ENCODE measurements at regions of chr22 and their contacts with region 1.

Region 1: GRCh38 chr22:46296257-46297150 is at the start of gene GTSE1:
- DNase-seq: peak; percentile 97 to 98 (median 97)
- H3K4me3 ChIP-seq: peak within 1 kb of the TSS; percentile 54 to 100 (median 78)
- H3K27ac ChIP-seq: peak within 1 kb of the TSS in 58 of 59 donors; percentile 4 to 97 (median 90)
- H3K27me3 ChIP-seq: no peaks in the 10 kb centered on the region
- CTCF ChIP-seq: peak in 54 of 56 donors; percentile 40 to 80 (median 60)
- total RNA-seq, gene GTSE1: 0.11 to 1.3 (median 0.53) TPM in 113 of 120 experiments, not detected in the others

Region 2: DNA sequence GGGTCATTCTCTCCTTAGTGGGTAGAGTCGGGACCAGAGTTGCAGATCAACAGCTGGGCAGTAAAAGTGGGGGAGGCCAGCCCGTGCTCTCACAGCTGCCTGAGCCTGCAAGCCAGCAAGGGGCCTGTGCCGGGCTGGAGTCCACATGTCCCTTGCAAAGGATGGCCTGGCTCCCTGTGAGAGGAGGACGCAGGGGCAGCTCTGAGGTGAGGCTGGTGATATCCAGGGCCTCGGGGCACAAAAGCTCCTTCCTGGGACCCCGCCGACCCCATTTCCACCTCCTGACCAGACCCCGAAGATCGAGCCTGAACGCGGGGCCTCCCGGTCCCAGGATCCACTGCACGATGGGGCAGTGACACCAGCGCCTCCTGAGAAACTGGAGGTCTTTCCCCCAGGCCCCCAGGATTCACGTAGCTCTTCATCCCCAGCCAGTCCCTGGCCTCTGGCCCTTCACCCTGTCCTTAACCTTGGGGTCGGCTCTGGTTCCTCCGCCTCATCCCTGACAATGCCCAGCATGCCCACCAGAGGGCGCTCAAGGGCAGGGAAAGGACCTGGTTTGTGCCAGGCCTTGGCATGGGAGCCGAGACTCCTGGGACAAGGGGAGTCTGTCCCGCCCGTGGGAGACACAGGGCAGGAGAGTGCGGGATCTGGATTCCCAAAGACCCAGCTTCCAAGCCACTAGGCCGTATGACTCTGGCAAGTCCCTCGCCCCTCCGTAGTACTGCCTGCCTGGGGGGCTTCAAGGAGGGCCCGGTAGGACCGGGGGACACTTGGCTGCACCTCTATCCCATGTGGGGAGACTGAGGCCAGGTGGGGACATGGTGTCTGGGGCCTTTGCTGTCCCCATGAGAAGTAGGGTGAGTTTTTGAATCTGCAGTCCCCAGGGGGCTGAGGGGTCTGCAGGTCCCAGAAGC is 301.8 kb before region 1 on chr22:
- intact Hi-C with region 1: loop called (anchors 5 kb)
- DNase-seq: peak in 9 of 10 donors; percentile 79 to 90 (median 86)
- H3K4me3 ChIP-seq: no peak overlapping the region
- H3K27ac ChIP-seq: peak overlapping the region in 3 of 59 donors; percentile 12 to 39 (median 36)
- H3K27me3 ChIP-seq: no peaks in the 10 kb centered on the region
- CTCF ChIP-seq: peak; percentile 86 to 99 (median 98)

Region 3: GRCh38 chr22:46122511-46122971 is 174.0 kb before region 1 on chr22:
- intact Hi-C with region 1: loop called (anchors 1 to 5 kb)
- DNase-seq: peak; percentile 61 to 80 (median 70)
- H3K4me3 ChIP-seq: peak overlapping the region in 23 of 59 donors; percentile 6 to 53 (median 28)
- H3K27ac ChIP-seq: no peak overlapping the region
- H3K27me3 ChIP-seq: no peaks in the 10 kb centered on the region
- CTCF ChIP-seq: peak; percentile 87 to 99 (median 97)

Region 4: DNA sequence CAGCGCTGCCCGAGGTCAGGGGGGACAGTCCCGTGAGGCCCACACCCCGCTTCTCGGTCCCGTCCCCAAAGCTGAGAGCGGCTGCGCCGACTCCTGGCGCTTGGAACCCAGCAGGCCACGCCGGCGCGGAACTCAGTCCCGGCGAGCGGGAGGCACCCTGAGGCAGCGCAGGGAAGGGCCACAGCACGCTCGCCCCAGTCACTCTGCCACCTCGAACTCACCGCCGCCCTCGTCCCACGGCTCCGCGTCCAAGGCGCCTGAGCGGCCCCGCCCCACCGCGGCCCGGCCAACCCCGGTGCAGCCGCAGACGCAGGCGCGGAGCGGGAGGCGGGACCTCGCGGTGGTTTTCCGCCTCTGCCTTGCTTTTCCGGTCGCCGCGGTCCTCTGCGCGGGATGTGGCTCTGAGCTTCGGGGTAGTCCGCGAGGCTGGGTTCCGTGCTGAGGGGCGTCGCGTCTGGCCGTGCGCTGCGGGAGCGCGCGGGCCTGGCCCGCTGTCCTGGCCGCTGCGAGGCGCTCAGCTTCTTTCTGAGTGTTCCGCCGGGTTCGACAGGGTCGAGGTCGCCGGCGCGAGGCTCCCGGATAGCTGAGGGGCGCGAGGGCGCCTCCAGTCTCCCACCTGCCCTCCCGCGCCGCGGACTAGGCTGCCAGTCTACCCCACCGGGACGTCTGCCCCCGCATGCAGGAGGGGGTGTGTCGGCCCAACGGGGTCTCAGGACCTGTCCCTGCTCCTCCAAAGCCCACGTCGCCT is 46.3 kb before region 1 on chr22 and contains the start of gene CDPF1:
- intact Hi-C with region 1: loop called (anchors 1 to 5 kb)
- DNase-seq: peak; percentile 81 to 96 (median 90)
- H3K4me3 ChIP-seq: peak within 1 kb of the TSS; percentile 63 to 99 (median 86)
- H3K27ac ChIP-seq: peak within 1 kb of the TSS; percentile 5 to 94 (median 85)
- H3K27me3 ChIP-seq: no peaks in the 10 kb centered on the region
- CTCF ChIP-seq: peak in 33 of 56 donors; percentile 11 to 51 (median 27)
- total RNA-seq, gene CDPF1: 3.3 to 15.3 (median 7.3) TPM

Region 5: GRCh38 chr22:46267431-46268279 is 28.8 kb before region 1 on chr22 and contains the start of gene TTC38:
- intact Hi-C with region 1: loop called in 1 of 2 experiments (anchors 2 kb)
- DNase-seq: peak; percentile 67 to 90 (median 82)
- H3K4me3 ChIP-seq: peak within 1 kb of the TSS; percentile 51 to 82 (median 70)
- H3K27ac ChIP-seq: peak within 1 kb of the TSS; percentile 29 to 93 (median 84)
- H3K27me3 ChIP-seq: peaks cover 0 to 24% (median 0%) of the 10 kb centered on the region in 45 donors
- CTCF ChIP-seq: peak in 13 of 56 donors; percentile 10 to 50 (median 27)
- total RNA-seq, gene TTC38: 5.5 to 42.2 (median 14.9) TPM

Region 6: DNA sequence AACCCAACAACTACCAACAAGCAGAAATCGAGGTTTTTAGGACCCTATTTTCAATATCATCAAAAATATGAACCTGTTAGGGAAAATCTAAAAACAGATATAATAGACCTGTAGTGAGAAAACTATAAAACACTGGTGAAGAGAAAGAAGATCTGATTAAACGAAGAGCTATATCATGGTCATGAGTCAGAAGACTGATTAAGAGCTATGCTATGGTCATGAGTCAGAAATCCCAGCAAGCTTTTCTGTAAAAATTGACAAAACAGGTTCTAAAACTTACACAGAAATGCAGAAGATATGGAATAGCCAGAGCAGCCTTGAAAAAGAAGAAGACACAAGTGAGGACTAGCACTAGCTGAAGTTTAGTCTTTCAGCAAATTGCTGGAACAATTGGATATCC is 810.9 kb after region 1 on chr22:
- intact Hi-C with region 1: no loop called
- DNase-seq: no peak
- H3K4me3 ChIP-seq: no peak overlapping the region
- H3K27ac ChIP-seq: no peak overlapping the region
- H3K27me3 ChIP-seq: no peaks in the 10 kb centered on the region
- CTCF ChIP-seq: no peak

Measured in dorsolateral prefrontal cortex (tissue), 120 donors.